ENCODE measurements at regions of chr16 and their contacts with region 1.

Region 1: DNA sequence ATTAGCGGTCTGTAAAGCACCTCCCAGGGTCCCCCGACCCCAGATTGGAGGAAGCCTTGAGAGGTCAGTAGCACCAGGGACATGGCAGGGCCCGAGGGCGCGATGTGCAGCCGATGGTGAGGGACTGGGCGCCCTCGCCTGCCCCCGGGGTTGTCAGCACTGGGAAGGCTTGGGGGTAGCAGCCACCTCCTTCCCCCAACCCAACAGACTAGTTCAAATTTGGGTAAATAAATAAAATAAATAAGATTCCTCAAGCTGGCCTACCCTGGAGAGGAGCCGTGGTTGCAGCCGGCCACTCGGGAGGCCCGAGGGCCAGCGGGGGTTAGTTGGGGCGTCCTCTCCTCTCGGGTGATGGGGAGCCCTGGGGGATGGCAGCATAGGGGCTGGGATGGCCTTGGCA is 1.5 kb downstream of the C16orf92 start:
- DNase-seq: no peak
- H3K4me3 ChIP-seq: no peak overlapping the region
- H3K27ac ChIP-seq: no peak overlapping the region
- H3K4me1 ChIP-seq: peaks cover 0 to 12% (median 11%) of the 10 kb centered on the region in 4 donors
- H3K27me3 ChIP-seq: peaks cover 11 to 45% (median 28%) of the 10 kb centered on the region in 3 donors
- CTCF ChIP-seq: no peak
- EP300 ChIP-seq: no peak
- POLR2A ChIP-seq: no peak

Region 2: GRCh38 chr16:29857133-29857760 is 167.2 kb before region 1 on chr16:
- intact Hi-C with region 1: loop called (anchors 5 kb)
- DNase-seq: no peak
- H3K4me3 ChIP-seq: no peak overlapping the region
- H3K27ac ChIP-seq: peak overlapping the region in 2 of 4 donors; percentile 62 to 63
- H3K4me1 ChIP-seq: peaks cover 0 to 37% (median 22%) of the 10 kb centered on the region in 4 donors
- H3K27me3 ChIP-seq: no peaks in the 10 kb centered on the region
- CTCF ChIP-seq: no peak
- EP300 ChIP-seq: no peak
- POLR2A ChIP-seq: no peak

Region 3: GRCh38 chr16:30110661-30111060 is 86.2 kb after region 1 on chr16:
- intact Hi-C with region 1: no loop called
- DNase-seq: no peak
- H3K4me3 ChIP-seq: no peak overlapping the region
- H3K27ac ChIP-seq: no peak overlapping the region
- H3K4me1 ChIP-seq: no peaks in the 10 kb centered on the region
- H3K27me3 ChIP-seq: no peaks in the 10 kb centered on the region
- CTCF ChIP-seq: no peak
- EP300 ChIP-seq: no peak
- POLR2A ChIP-seq: no peak